Gastrocnemius medialis (tissue), 4 donors: ENCODE measurements at regions of chr6 and their contacts with region 1.

Region 1: GRCh38 chr6:4460586-4461475 is 315.4 kb upstream of the CDYL start:
- DNase-seq: peak; percentile 67 to 77
- ATAC-seq: peak; percentile 84 to 90
- H3K4me3 ChIP-seq: peak overlapping the region in 2 of 4 donors; percentile 7 to 19
- H3K27ac ChIP-seq: peak overlapping the region; percentile 38 to 72 (median 68)
- H3K4me1 ChIP-seq: peaks cover 18 to 22% of the 10 kb centered on the region in 2 donors
- H3K27me3 ChIP-seq: no peaks in the 10 kb centered on the region
- CTCF ChIP-seq: no peak
- POLR2A ChIP-seq: peak in 1 of 2 donors; percentile 32

Region 2: DNA sequence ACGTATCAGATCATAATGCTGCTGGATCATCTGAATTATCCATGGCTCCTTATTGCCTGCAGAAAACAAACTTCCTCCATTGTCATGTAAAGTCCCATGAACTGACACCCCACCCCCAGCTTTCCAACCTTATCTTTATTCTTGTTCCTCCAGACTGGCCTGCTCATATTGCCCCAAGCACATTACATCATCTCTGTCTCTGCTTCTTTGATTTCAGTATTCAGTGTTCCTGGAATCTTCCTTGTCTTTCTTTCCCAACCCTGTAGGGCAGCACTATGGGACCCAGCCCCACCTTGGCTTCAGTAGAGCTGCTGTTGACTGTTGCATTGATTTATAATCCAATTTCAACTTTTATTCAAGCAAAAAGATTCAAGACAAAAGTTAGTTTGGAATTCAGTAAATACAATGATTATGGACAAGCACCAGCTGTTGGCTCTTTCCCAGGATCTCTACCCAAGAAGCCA is 138.0 kb before region 1 on chr6:
- in situ Hi-C with region 1: no loop called
- intact Hi-C with region 1: loop called (anchors 2 kb)
- DNase-seq: peak; percentile 41 to 70
- ATAC-seq: peak; percentile 97
- H3K4me3 ChIP-seq: no peak overlapping the region
- H3K27ac ChIP-seq: peak overlapping the region; percentile 63 to 82 (median 80)
- H3K4me1 ChIP-seq: peaks cover 29 to 64% of the 10 kb centered on the region in 2 donors
- H3K27me3 ChIP-seq: no peaks in the 10 kb centered on the region
- CTCF ChIP-seq: no peak
- POLR2A ChIP-seq: no peak

Region 3: GRCh38 chr6:4480788-4481735 is 20.2 kb after region 1 on chr6:
- in situ Hi-C with region 1: no loop called
- intact Hi-C with region 1: no loop called
- DNase-seq: no peak
- ATAC-seq: no peak
- H3K4me3 ChIP-seq: no peak overlapping the region
- H3K27ac ChIP-seq: no peak overlapping the region
- H3K4me1 ChIP-seq: no peaks in the 10 kb centered on the region
- H3K27me3 ChIP-seq: no peaks in the 10 kb centered on the region
- CTCF ChIP-seq: no peak
- POLR2A ChIP-seq: no peak